Panc1 (cell line): ENCODE measurements at regions of chr9 and their contacts with region 1.

Region 1: GRCh38 chr9:132600326-132600984 is 18.0 kb downstream of the BARHL1 start:
- DNase-seq: no peak
- ATAC-seq: no peak
- H3K4me3 ChIP-seq: no peak overlapping the region
- H3K27ac ChIP-seq: no peak overlapping the region
- H3K4me1 ChIP-seq: no peaks in the 10 kb centered on the region
- H3K27me3 ChIP-seq: no peaks in the 10 kb centered on the region
- CTCF ChIP-seq: no peak

Region 2: GRCh38 chr9:132516911-132517310 is 83.5 kb before region 1 on chr9:
- CTCF ChIA-PET with region 1: no interaction called
- POLR2A ChIA-PET with region 1: no interaction called
- in situ Hi-C with region 1: no loop called
- intact Hi-C with region 1: no loop called
- DNase-seq: no peak
- ATAC-seq: no peak
- H3K4me3 ChIP-seq: no peak overlapping the region
- H3K27ac ChIP-seq: no peak overlapping the region
- H3K4me1 ChIP-seq: no peaks in the 10 kb centered on the region
- H3K27me3 ChIP-seq: no peaks in the 10 kb centered on the region
- CTCF ChIP-seq: no peak

Region 3: GRCh38 chr9:132669698-132670456 is 69.4 kb after region 1 on chr9 and contains the start of gene DDX31:
- CTCF ChIA-PET with region 1: no interaction called
- POLR2A ChIA-PET with region 1: no interaction called
- in situ Hi-C with region 1: no loop called
- intact Hi-C with region 1: no loop called
- DNase-seq: no peak
- ATAC-seq: peak; percentile 95
- H3K4me3 ChIP-seq: peak within 1 kb of the TSS; percentile 71 to 83
- H3K27ac ChIP-seq: peak within 1 kb of the TSS; percentile 92
- H3K4me1 ChIP-seq: peaks cover 8% of the 10 kb centered on the region; the same call in 1 of the 2 replicates
- H3K27me3 ChIP-seq: no peaks in the 10 kb centered on the region
- CTCF ChIP-seq: no peak
- total RNA-seq, gene DDX31: 17.5 TPM

Region 4: GRCh38 chr9:132768932-132769905 is 168.8 kb after region 1 on chr9:
- CTCF ChIA-PET with region 1: no interaction called
- POLR2A ChIA-PET with region 1: interaction called, 11 read pairs
- in situ Hi-C with region 1: no loop called
- intact Hi-C with region 1: no loop called
- DNase-seq: no peak
- ATAC-seq: peak; percentile 87
- H3K4me3 ChIP-seq: peak overlapping the region; percentile 58 to 83
- H3K27ac ChIP-seq: peak overlapping the region; percentile 80
- H3K4me1 ChIP-seq: no peaks in the 10 kb centered on the region
- H3K27me3 ChIP-seq: no peaks in the 10 kb centered on the region
- CTCF ChIP-seq: peak; percentile 55